ENCODE measurements at regions of chr16 and their contacts with region 1.

Region 1: GRCh38 chr16:1527836-1528811 is 5.3 kb upstream of the TMEM204 start:
- DNase-seq: no peak
- ATAC-seq: no peak
- H3K4me3 ChIP-seq: no peak overlapping the region
- H3K4me3 Mint-ChIP-seq: peak overlapping the region; percentile 85
- H3K27ac ChIP-seq: no peak overlapping the region
- H3K27ac Mint-ChIP-seq: peak overlapping the region; percentile 37
- H3K4me1 ChIP-seq: peaks cover 44% of the 10 kb centered on the region
- H3K4me1 Mint-ChIP-seq: peaks cover 38% of the 10 kb centered on the region
- H3K27me3 ChIP-seq: no peaks in the 10 kb centered on the region
- H3K27me3 Mint-ChIP-seq: no peaks in the 10 kb centered on the region
- CTCF ChIP-seq: no peak

Region 2: DNA sequence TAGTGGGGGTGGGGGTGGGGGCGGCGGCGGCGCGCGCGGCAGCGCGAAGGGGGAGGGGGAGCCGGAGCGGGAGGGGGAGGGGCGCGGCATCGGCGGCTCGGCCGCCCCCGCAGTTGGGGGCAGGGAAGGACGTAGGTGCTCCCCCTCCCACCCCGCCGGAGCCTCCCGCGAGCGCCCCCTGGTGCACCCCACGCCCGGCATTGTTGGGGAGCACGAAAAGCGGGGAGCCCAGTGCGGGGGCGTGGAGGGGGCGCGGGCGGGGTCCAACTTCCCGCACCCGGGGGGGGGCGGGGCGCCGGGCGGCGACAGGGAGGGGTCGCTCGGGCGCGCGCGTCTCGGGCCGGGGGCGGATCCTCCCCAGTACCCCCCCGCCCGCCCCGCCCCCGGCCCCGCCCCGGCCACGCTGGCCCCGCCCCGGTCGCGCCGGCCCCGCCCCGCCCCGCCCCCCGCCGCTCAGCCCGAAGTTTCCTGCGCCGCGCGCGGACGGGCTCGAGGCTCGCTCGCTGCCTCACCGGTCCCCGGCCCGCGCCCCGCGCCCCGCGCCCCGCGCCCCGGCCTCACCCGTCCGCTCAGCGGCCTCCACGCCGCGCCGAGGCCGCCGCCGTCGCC is 375.4 kb before region 1 on chr16 and contains the start of gene CACNA1H:
- CTCF ChIA-PET with region 1: no interaction called
- POLR2A ChIA-PET with region 1: no interaction called
- intact Hi-C with region 1: no loop called
- DNase-seq: peak; percentile 27 to 74 (median 67)
- ATAC-seq: peak; percentile 77
- H3K4me3 ChIP-seq: peak within 1 kb of the TSS; percentile 29 to 37
- H3K4me3 Mint-ChIP-seq: peak within 1 kb of the TSS; percentile 72
- H3K27ac ChIP-seq: no peak within 1 kb of the TSS
- H3K27ac Mint-ChIP-seq: no peak within 1 kb of the TSS
- H3K4me1 ChIP-seq: peaks cover 11% of the 10 kb centered on the region
- H3K4me1 Mint-ChIP-seq: peaks cover 2% of the 10 kb centered on the region
- H3K27me3 ChIP-seq: peaks cover 12 to 22% of the 10 kb centered on the region in 2 experiments
- H3K27me3 Mint-ChIP-seq: peaks cover 10% of the 10 kb centered on the region
- CTCF ChIP-seq: peak; percentile 44
- total RNA-seq, gene CACNA1H: 1.5 to 1.9 TPM

Region 3: GRCh38 chr16:1182316-1182671 is 345.8 kb before region 1 on chr16:
- CTCF ChIA-PET with region 1: no interaction called
- POLR2A ChIA-PET with region 1: no interaction called
- intact Hi-C with region 1: no loop called
- DNase-seq: no peak
- ATAC-seq: no peak
- H3K4me3 ChIP-seq: no peak overlapping the region
- H3K4me3 Mint-ChIP-seq: no peak overlapping the region
- H3K27ac ChIP-seq: no peak overlapping the region
- H3K27ac Mint-ChIP-seq: no peak overlapping the region
- H3K4me1 ChIP-seq: no peaks in the 10 kb centered on the region
- H3K4me1 Mint-ChIP-seq: no peaks in the 10 kb centered on the region
- H3K27me3 ChIP-seq: no peaks in the 10 kb centered on the region
- H3K27me3 Mint-ChIP-seq: no peaks in the 10 kb centered on the region
- CTCF ChIP-seq: no peak

Region 4: GRCh38 chr16:1543085-1543896 is 15.2 kb after region 1 on chr16:
- CTCF ChIA-PET with region 1: interaction called, 3 read pairs
- POLR2A ChIA-PET with region 1: interaction called, 6 read pairs
- intact Hi-C with region 1: loop called in 1 of 2 experiments (anchors 2 kb)
- DNase-seq: peak in 5 of 9 experiments; percentile 42 to 65 (median 48)
- ATAC-seq: peak; percentile 68
- H3K4me3 ChIP-seq: no peak overlapping the region
- H3K4me3 Mint-ChIP-seq: peak overlapping the region; percentile 44
- H3K27ac ChIP-seq: peak overlapping the region; percentile 4 to 44
- H3K27ac Mint-ChIP-seq: peak overlapping the region; percentile 76
- H3K4me1 ChIP-seq: peaks cover 93% of the 10 kb centered on the region
- H3K4me1 Mint-ChIP-seq: peaks cover 71% of the 10 kb centered on the region
- H3K27me3 ChIP-seq: no peaks in the 10 kb centered on the region
- H3K27me3 Mint-ChIP-seq: no peaks in the 10 kb centered on the region
- CTCF ChIP-seq: no peak

Region 5: GRCh38 chr16:1564325-1564724 is 36.2 kb after region 1 on chr16:
- CTCF ChIA-PET with region 1: no interaction called
- POLR2A ChIA-PET with region 1: interaction called, 5 read pairs
- intact Hi-C with region 1: loop called in 1 of 2 experiments (anchors 5 kb)
- DNase-seq: peak in 2 of 9 experiments; percentile 21 to 26
- ATAC-seq: no peak
- H3K4me3 ChIP-seq: no peak overlapping the region
- H3K4me3 Mint-ChIP-seq: no peak overlapping the region
- H3K27ac ChIP-seq: no peak overlapping the region
- H3K27ac Mint-ChIP-seq: no peak overlapping the region
- H3K4me1 ChIP-seq: peaks cover 41% of the 10 kb centered on the region
- H3K4me1 Mint-ChIP-seq: peaks cover 28% of the 10 kb centered on the region
- H3K27me3 ChIP-seq: no peaks in the 10 kb centered on the region
- H3K27me3 Mint-ChIP-seq: no peaks in the 10 kb centered on the region
- CTCF ChIP-seq: no peak